ENCODE measurements at regions of chr16 and their contacts with region 1.

Region 1: DNA sequence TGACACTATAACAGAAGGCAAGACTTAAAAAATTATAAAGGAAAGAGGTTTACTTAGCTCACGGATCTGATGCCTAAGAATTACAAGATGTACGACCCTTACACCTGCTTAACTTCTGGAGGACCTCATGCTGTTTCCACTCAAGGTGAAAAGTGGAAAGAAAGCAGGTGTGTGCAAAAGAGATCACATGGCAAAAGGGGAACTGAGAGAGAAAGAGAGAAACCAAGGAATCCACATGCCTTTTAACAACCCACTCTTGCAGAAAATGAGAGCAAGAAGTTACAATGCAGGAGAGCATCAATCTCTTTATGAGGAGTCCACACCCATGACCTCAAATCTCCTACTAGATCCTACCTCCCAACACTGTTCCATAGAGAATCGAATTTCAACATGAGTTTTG is 2382.2 kb downstream of the TP53TG3F start:
- DNase-seq: no peak
- H3K4me3 ChIP-seq: no peak overlapping the region
- H3K27ac ChIP-seq: no peak overlapping the region
- H3K4me1 ChIP-seq: no peaks in the 10 kb centered on the region
- H3K27me3 ChIP-seq: no peaks in the 10 kb centered on the region
- CTCF ChIP-seq: no peak
- POLR2A ChIP-seq: no peak

Region 2: DNA sequence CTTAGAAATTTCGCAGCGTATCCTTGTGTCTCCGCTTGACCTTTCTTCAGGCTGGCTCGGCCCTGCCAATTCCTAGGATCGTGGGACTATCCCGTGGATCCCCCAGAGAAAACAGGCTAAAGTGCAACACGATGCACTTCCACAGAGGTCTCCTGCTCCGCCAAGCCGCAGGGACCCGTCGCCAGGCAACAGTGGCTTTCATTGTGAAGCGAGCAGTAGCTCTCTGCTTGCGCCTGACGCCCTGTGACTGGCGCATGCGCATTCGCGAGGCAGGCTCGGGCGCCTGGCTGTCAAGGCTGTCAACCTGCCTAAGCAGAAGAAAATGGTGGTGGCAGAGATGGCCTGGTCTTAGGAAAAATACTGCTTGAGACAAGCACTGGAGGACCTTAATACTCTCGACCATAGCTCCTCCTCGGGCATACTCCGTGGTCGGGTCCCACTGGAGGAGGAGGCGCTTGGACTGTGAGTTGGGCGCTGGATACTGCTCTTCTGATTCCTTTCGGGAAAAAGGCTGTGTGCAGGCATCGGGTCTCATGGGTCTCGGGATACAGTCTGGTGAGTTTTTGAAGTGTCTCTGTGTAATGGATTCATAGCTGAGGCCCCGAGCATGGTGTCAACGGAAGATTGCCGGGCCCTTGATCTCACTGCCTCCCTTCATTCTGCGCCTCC is 46.1 kb before region 1 on chr16:
- intact Hi-C with region 1: loop called (anchors 5 kb)
- DNase-seq: no peak
- H3K4me3 ChIP-seq: no peak overlapping the region
- H3K27ac ChIP-seq: no peak overlapping the region
- H3K4me1 ChIP-seq: no peaks in the 10 kb centered on the region
- H3K27me3 ChIP-seq: no peaks in the 10 kb centered on the region
- CTCF ChIP-seq: no peak
- POLR2A ChIP-seq: no peak